Endothelial cell of umbilical vein (primary cell): ENCODE measurements at regions of chrX and their contacts with region 1.

Region 1: DNA sequence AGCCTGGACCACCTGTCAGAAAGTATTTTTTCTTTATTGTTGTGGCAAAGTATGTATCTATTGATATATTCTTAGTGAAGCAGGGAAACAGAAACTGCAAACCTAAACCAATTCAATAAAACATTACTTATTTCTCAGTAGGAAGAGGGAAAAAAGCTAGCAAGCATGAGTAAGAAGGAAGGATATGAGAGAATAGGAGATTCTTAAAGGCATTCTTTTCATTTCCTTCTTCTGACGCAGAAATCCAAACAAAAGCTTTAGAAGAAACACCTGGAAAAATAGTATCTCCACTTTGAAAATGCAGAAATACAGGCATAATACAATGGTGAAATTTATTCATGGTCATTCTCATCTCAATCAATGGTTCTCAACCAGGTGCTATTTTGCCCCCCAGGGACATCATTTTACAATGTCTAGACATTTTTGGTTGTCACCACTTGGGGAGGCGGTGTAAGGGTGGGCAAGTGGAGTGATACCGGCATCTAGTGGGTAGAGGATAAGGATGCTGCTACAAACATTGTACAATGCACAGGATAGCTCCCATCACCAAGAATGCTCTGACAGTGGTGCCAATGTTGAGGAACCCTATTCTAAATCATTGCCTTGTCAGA is 21.7 kb upstream of the ATXN3L start:
- DNase-seq: peak; percentile 59
- H3K4me3 ChIP-seq: no peak overlapping the region
- H3K27ac ChIP-seq: peak overlapping the region; percentile 90
- H3K4me1 ChIP-seq: peaks cover 20% of the 10 kb centered on the region
- H3K27me3 ChIP-seq: no peaks in the 10 kb centered on the region
- CTCF ChIP-seq: no peak
- POLR2A ChIP-seq: no peak

Region 2: GRCh38 chrX:13110433-13111324 is 230.9 kb before region 1 on chrX:
- CTCF ChIA-PET with region 1: no interaction called
- POLR2A ChIA-PET with region 1: interaction called, 3 read pairs
- dilution Hi-C with region 1: no loop called
- intact Hi-C with region 1: loop called (anchors 2 kb)
- DNase-seq: peak; percentile 89
- H3K4me3 ChIP-seq: no peak overlapping the region
- H3K27ac ChIP-seq: peak overlapping the region; percentile 64
- H3K4me1 ChIP-seq: peaks cover 14% of the 10 kb centered on the region
- H3K27me3 ChIP-seq: no peaks in the 10 kb centered on the region
- CTCF ChIP-seq: no peak
- POLR2A ChIP-seq: no peak

Region 3: DNA sequence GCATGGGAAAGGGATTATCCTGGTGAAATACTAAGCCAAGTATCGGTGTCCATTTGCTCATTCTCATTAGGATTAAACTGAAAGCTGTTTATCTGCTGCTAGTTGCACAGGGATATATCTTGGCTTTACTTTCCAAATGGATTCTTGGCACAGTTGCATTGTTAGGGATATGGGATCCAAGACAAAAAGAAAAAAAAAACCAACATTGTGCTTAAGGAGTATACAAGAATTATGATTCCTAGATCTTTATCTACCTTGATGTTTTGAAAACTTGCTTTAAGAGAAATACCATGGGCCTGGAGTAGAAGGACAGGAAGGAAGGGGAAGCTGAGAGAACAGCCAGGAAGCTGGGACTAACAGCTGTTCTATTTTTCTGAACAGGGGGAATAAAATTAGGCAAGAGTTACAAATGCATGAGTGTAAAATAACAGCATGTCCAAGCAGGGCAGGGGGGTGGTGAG is 129.4 kb before region 1 on chrX:
- CTCF ChIA-PET with region 1: no interaction called
- POLR2A ChIA-PET with region 1: no interaction called
- dilution Hi-C with region 1: no loop called
- intact Hi-C with region 1: loop called (anchors 1 kb)
- DNase-seq: peak; percentile 82
- H3K4me3 ChIP-seq: no peak overlapping the region
- H3K27ac ChIP-seq: peak overlapping the region; percentile 63
- H3K4me1 ChIP-seq: peaks cover 24% of the 10 kb centered on the region
- H3K27me3 ChIP-seq: no peaks in the 10 kb centered on the region
- CTCF ChIP-seq: no peak
- POLR2A ChIP-seq: no peak

Region 4: GRCh38 chrX:13250826-13251580 is 90.6 kb before region 1 on chrX:
- CTCF ChIA-PET with region 1: interaction called, 4 read pairs
- POLR2A ChIA-PET with region 1: interaction called, 3 read pairs
- dilution Hi-C with region 1: no loop called
- intact Hi-C with region 1: loop called (anchors 1 kb)
- DNase-seq: peak; percentile 89
- H3K4me3 ChIP-seq: no peak overlapping the region
- H3K27ac ChIP-seq: peak overlapping the region; percentile 69
- H3K4me1 ChIP-seq: peaks cover 9% of the 10 kb centered on the region
- H3K27me3 ChIP-seq: no peaks in the 10 kb centered on the region
- CTCF ChIP-seq: no peak
- POLR2A ChIP-seq: no peak

Region 5: DNA sequence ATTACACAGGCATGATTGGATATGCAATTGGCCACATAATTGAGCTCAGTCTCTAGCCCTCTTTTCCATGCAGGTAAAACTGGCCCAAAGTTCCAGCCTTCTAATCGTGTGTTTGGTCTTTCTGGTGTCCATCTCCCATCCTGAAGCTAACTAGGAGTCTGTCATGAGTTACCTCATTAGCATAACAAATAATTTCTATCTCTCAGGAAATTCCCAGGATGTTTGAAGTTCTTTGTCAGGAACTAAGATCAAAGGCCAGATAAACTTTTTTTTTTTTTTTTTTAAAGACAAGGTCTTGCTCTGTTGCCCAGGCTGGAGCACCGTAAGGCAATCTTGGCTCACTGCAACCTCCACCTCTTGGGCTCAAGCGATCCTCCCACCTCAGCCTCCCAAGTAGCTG is 37.5 kb before region 1 on chrX:
- CTCF ChIA-PET with region 1: no interaction called
- POLR2A ChIA-PET with region 1: no interaction called
- dilution Hi-C with region 1: no loop called
- intact Hi-C with region 1: loop called (anchors 1 kb)
- DNase-seq: no peak
- H3K4me3 ChIP-seq: no peak overlapping the region
- H3K27ac ChIP-seq: peak overlapping the region; percentile 40
- H3K4me1 ChIP-seq: peaks cover 4% of the 10 kb centered on the region
- H3K27me3 ChIP-seq: no peaks in the 10 kb centered on the region
- CTCF ChIP-seq: no peak
- POLR2A ChIP-seq: no peak